Activated B cell treated with CpG ODN at 0.5 μM for 24 hours (primary cell): ENCODE measurements at regions of chr20 and their contacts with region 1.

Region 1: DNA sequence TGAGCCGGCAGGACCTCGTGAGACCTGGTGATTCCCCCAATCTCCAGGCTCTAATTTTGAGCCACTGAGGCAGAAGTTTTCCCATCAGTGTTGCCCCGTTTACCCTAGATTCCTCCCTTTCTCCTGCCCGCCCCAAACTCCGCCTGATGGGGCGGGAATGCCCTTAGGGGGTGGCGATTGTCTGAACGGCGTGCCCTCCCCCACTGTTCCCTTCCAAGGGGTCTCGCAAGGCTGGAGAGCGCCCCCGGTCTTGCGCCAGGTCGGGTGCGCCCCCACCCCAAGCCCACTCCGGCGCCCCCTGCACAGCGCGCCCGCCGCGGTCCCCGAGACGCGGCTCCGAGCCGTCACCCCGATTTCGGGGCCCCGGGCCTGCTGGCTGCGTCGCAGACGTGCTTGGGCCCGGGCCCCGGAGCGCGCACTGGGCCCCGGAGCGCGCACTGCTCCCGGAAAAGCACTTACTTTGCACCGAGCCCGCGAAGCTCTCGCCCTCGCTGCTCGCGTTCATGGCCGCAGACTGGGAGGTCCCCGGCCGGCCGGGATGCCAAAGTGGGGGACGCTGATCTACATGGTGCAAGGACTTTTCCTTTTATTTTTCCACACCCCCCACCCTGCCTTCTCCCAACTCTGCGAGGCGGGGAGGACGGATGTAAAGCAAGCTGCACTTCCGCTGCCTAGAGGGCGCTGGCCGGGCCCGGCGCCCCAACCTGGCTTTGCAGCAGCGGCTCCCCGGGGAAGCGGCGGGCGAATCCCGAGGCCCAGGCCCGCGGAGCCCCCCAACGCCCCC is at the start of gene ZFP64:
- DNase-seq: peak; percentile 76
- ATAC-seq: peak; percentile 81
- H3K4me3 Mint-ChIP-seq: peak within 1 kb of the TSS; percentile 96
- H3K27ac Mint-ChIP-seq: peak within 1 kb of the TSS; percentile 91
- H3K4me1 Mint-ChIP-seq: peaks cover 18% of the 10 kb centered on the region
- H3K27me3 Mint-ChIP-seq: no peaks in the 10 kb centered on the region
- CTCF ChIP-seq: peak; percentile 18
- total RNA-seq, gene ZFP64: 13.7 and 14.2 TPM in 2 replicates

Region 2: DNA sequence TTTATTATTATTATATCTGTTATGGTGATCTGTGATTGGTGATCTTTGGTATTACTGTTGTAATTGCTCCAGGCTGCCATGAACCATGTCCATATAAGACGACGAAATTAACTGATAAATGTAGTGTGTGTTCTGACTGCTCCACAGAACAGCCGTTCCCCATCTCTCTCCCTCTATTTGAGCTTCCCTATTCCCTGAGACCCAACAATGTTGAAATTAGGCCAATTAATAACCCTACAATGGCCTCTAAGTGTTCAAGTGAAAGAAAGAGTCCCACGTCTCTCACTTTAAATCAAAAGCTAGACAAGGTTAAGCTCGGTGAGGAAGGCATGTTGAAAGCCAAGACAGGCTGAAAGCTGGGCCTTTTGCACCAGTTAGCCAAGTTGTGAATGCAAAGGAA is 51.3 kb before region 1 on chr20:
- CTCF ChIA-PET with region 1: no interaction called
- POLR2A ChIA-PET with region 1: no interaction called
- intact Hi-C with region 1: no loop called
- DNase-seq: no peak
- ATAC-seq: no peak
- H3K4me3 Mint-ChIP-seq: no peak overlapping the region
- H3K27ac Mint-ChIP-seq: no peak overlapping the region
- H3K4me1 Mint-ChIP-seq: peaks cover 1% of the 10 kb centered on the region
- H3K27me3 Mint-ChIP-seq: no peaks in the 10 kb centered on the region
- CTCF ChIP-seq: no peak

Region 3: GRCh38 chr20:52150440-52151258 is 40.7 kb before region 1 on chr20:
- CTCF ChIA-PET with region 1: no interaction called
- POLR2A ChIA-PET with region 1: no interaction called
- intact Hi-C with region 1: loop called (anchors 2 kb)
- DNase-seq: no peak
- ATAC-seq: no peak
- H3K4me3 Mint-ChIP-seq: no peak overlapping the region
- H3K27ac Mint-ChIP-seq: no peak overlapping the region
- H3K4me1 Mint-ChIP-seq: no peaks in the 10 kb centered on the region
- H3K27me3 Mint-ChIP-seq: no peaks in the 10 kb centered on the region
- CTCF ChIP-seq: peak; percentile 36

Region 4: DNA sequence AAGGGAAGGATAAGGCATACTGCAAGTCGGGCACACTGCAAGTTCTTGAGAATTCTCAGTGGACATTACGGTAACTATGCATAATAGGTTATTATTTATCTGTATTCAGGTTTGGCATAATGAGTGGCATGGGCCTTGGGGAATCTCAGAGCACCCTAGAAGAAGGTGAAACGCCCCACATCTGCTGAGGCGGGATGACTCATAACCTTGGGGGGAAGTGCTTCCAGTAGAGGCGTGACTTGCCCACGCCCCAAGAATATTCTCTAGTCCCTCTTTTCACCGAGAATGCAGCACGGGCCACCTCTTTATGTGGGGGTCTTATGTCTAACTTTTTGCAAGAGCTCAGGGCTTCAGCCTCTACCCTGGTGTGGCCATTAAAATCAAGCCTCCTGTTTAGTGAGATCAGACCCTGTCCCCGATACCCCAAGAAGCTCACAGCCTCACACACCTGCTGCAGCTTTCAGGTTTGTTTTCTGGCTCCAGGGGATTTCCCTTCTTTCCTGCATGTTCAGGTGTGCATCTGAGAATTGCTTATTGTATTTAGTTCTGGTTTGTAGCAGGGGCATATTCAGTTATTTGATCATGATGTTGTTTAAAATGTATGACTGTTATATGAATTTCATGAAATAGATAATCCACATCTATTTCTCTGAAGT is 18.8 kb before region 1 on chr20:
- CTCF ChIA-PET with region 1: no interaction called
- POLR2A ChIA-PET with region 1: no interaction called
- intact Hi-C with region 1: loop called (anchors 2 kb)
- DNase-seq: no peak
- ATAC-seq: peak; percentile 70
- H3K4me3 Mint-ChIP-seq: no peak overlapping the region
- H3K27ac Mint-ChIP-seq: peak overlapping the region; percentile 5
- H3K4me1 Mint-ChIP-seq: peaks cover 32% of the 10 kb centered on the region
- H3K27me3 Mint-ChIP-seq: no peaks in the 10 kb centered on the region
- CTCF ChIP-seq: no peak

Region 5: GRCh38 chr20:52242237-52243230 is 51.2 kb after region 1 on chr20:
- CTCF ChIA-PET with region 1: no interaction called
- POLR2A ChIA-PET with region 1: no interaction called
- intact Hi-C with region 1: loop called (anchors 2 kb)
- DNase-seq: no peak
- ATAC-seq: no peak
- H3K4me3 Mint-ChIP-seq: no peak overlapping the region
- H3K27ac Mint-ChIP-seq: no peak overlapping the region
- H3K4me1 Mint-ChIP-seq: no peaks in the 10 kb centered on the region
- H3K27me3 Mint-ChIP-seq: peaks cover 10% of the 10 kb centered on the region
- CTCF ChIP-seq: peak; percentile 73